T-cell (primary cell): ENCODE measurements at regions of chr1 and their contacts with region 1.

Region 1: GRCh38 chr1:23634842-23635651 is 56.6 kb upstream of the RPL11 start:
- DNase-seq: peak in 31 of 35 experiments; percentile 17 to 83 (median 42)
- ATAC-seq: peak; percentile 74 to 88 (median 82)
- H3K4me3 ChIP-seq: peak overlapping the region; percentile 22 to 62
- H3K4me3 Mint-ChIP-seq: peak overlapping the region; percentile 64 to 72 (median 67)
- H3K27ac ChIP-seq: peak overlapping the region; percentile 34
- H3K27ac Mint-ChIP-seq: peak overlapping the region; percentile 91
- H3K4me1 ChIP-seq: peaks cover 16 to 25% of the 10 kb centered on the region in 2 experiments
- H3K4me1 Mint-ChIP-seq: peaks cover 34 to 41% (median 40%) of the 10 kb centered on the region in 3 donors
- H3K27me3 ChIP-seq: peaks cover 0 to 15% of the 10 kb centered on the region in 2 experiments
- H3K27me3 Mint-ChIP-seq: no peaks in the 10 kb centered on the region

Region 2: GRCh38 chr1:23539698-23540266 is 95.3 kb before region 1 on chr1:
- CTCF ChIA-PET with region 1: interaction called, 25 to 72 read pairs
- POLR2A ChIA-PET with region 1: interaction called, 4 to 5 read pairs
- DNase-seq: peak; percentile 81 to 96 (median 88)
- ATAC-seq: peak; percentile 94 to 98 (median 98)
- H3K4me3 ChIP-seq: no peak overlapping the region
- H3K4me3 Mint-ChIP-seq: peak overlapping the region; percentile 30 to 37 (median 35)
- H3K27ac ChIP-seq: peak overlapping the region; percentile 44
- H3K27ac Mint-ChIP-seq: peak overlapping the region; percentile 72 to 83
- H3K4me1 ChIP-seq: peaks cover 9 to 17% of the 10 kb centered on the region in 2 experiments
- H3K4me1 Mint-ChIP-seq: peaks cover 13 to 31% (median 13%) of the 10 kb centered on the region in 3 donors
- H3K27me3 ChIP-seq: no peaks in the 10 kb centered on the region
- H3K27me3 Mint-ChIP-seq: no peaks in the 10 kb centered on the region

Region 3: GRCh38 chr1:23548704-23549143 is 86.3 kb before region 1 on chr1:
- CTCF ChIA-PET with region 1: interaction called, 25 to 72 read pairs
- POLR2A ChIA-PET with region 1: interaction called, 3 to 4 read pairs
- DNase-seq: no peak
- ATAC-seq: no peak
- H3K4me3 ChIP-seq: no peak overlapping the region
- H3K4me3 Mint-ChIP-seq: no peak overlapping the region
- H3K27ac ChIP-seq: no peak overlapping the region
- H3K27ac Mint-ChIP-seq: no peak overlapping the region
- H3K4me1 ChIP-seq: peaks cover 25 to 32% of the 10 kb centered on the region in 2 experiments
- H3K4me1 Mint-ChIP-seq: peaks cover 16 to 28% (median 22%) of the 10 kb centered on the region in 3 donors
- H3K27me3 ChIP-seq: peaks cover 0 to 2% of the 10 kb centered on the region in 2 experiments
- H3K27me3 Mint-ChIP-seq: no peaks in the 10 kb centered on the region

Region 4: GRCh38 chr1:23559136-23559984 is 75.7 kb before region 1 on chr1 and contains the start of gene ID3:
- CTCF ChIA-PET with region 1: interaction called, 4 to 31 read pairs
- POLR2A ChIA-PET with region 1: interaction called in 1 of 2 experiments, 4 read pairs
- DNase-seq: peak; percentile 63 to 95 (median 85)
- ATAC-seq: peak; percentile 65 to 70 (median 68)
- H3K4me3 ChIP-seq: peak within 1 kb of the TSS; percentile 79 to 100
- H3K4me3 Mint-ChIP-seq: peak within 1 kb of the TSS; percentile 85 to 96 (median 95)
- H3K27ac ChIP-seq: peak within 1 kb of the TSS; percentile 64
- H3K27ac Mint-ChIP-seq: peak within 1 kb of the TSS; percentile 87 to 89
- H3K4me1 ChIP-seq: peaks cover 36 to 68% of the 10 kb centered on the region in 2 experiments
- H3K4me1 Mint-ChIP-seq: peaks cover 63 to 75% (median 73%) of the 10 kb centered on the region in 3 donors
- H3K27me3 ChIP-seq: peaks cover 0 to 10% of the 10 kb centered on the region in 2 experiments
- H3K27me3 Mint-ChIP-seq: no peaks in the 10 kb centered on the region
- total RNA-seq, gene ID3: 20.7 to 99.7 (median 81.3) TPM

Region 5: GRCh38 chr1:23619299-23620188 is 15.5 kb before region 1 on chr1:
- CTCF ChIA-PET with region 1: interaction called, 3 to 14 read pairs
- POLR2A ChIA-PET with region 1: interaction called in 1 of 2 experiments, 5 read pairs
- DNase-seq: peak; percentile 66 to 91 (median 79)
- ATAC-seq: peak; percentile 86 to 92 (median 90)
- H3K4me3 ChIP-seq: peak overlapping the region; percentile 51 to 64
- H3K4me3 Mint-ChIP-seq: peak overlapping the region; percentile 70 to 80 (median 74)
- H3K27ac ChIP-seq: peak overlapping the region; percentile 84
- H3K27ac Mint-ChIP-seq: peak overlapping the region; percentile 97 to 99
- H3K4me1 ChIP-seq: peaks cover 54 to 76% of the 10 kb centered on the region in 2 experiments
- H3K4me1 Mint-ChIP-seq: peaks cover 89 to 94% (median 92%) of the 10 kb centered on the region in 3 donors
- H3K27me3 ChIP-seq: peaks cover 0 to 3% of the 10 kb centered on the region in 2 experiments
- H3K27me3 Mint-ChIP-seq: no peaks in the 10 kb centered on the region